Head of caudate nucleus (tissue), 42 donors: ENCODE measurements at regions of chr4 and their contacts with region 1.

Region 1: DNA sequence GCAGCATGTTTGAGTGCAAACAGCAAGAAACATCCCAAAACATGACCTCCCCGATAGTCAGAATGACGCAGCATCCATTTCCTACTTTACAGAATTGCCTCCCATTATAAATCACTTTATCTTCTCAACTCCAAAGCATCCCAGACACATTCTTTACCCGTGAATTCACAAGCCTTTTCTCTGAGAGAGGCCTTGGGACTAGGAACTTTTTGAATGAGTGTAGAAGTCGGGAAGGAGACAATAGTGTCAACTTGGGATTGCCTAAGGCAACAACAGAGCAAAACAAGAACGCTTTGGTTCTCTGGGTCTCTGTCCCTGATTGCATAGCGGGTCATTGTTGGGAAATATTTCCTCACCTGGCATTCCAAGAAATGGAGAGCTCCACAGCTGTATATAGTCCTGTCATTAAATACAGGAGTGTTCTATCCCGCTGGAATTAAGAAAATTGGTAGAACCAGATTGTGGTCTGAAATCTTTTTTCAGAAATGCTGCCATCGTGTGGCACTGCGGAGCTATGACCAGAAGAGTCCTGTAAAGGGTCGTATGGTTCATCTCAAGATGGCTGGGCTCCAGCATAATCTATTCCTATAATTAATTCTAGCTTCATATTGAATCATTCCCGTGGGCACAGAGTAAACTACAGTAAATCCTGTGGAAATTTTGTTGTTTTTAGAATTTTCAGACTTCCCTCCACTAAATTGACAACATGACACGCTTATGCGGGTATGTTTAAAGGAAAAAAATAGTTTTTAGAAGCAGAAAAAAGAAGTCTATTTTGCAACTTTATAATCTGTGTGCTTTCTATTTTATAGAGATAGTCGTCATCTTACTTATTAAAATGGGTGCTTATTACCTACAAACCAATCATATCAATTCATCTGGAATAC is 2.0 kb upstream of the SPP1 start:
- DNase-seq: peak; percentile 25 to 90 (median 72)

Region 2: DNA sequence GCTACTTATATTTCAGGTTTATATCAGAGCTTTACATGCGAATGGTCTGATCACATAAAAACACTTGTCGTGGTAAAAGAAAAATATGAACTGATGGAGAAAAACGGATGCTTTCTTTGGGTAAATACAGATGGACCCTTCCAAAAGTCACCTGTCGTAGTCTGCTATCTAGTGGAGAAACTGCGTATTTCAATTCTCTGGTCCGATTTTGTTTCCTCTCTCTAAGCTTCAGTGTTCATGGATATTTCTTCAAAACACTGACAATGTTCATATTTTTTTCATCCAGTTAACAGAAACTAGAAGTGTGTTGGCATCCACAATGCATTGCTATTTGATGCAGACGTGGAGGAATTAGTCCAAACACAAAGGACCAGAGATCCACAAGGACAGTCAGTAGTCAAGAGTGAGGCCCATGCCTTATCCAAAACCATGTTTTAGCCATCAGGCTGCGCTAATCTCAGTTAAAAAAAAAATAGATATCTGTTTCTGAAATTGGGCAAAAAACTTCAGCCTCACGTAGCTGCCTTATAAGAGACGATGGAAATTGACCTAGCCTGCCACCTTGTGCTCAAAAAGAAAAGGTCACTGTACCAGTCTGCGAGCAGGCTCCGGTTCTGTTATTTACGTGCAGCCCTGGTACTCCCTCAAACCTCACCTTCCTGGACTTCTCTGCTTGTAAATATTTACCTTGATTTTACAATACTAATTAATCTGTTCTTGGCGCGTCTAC is 124.7 kb before region 1 on chr4:
- intact Hi-C with region 1: loop called (anchors 5 kb)
- DNase-seq: peak in 41 of 42 donors; percentile 35 to 89 (median 74)

Region 3: DNA sequence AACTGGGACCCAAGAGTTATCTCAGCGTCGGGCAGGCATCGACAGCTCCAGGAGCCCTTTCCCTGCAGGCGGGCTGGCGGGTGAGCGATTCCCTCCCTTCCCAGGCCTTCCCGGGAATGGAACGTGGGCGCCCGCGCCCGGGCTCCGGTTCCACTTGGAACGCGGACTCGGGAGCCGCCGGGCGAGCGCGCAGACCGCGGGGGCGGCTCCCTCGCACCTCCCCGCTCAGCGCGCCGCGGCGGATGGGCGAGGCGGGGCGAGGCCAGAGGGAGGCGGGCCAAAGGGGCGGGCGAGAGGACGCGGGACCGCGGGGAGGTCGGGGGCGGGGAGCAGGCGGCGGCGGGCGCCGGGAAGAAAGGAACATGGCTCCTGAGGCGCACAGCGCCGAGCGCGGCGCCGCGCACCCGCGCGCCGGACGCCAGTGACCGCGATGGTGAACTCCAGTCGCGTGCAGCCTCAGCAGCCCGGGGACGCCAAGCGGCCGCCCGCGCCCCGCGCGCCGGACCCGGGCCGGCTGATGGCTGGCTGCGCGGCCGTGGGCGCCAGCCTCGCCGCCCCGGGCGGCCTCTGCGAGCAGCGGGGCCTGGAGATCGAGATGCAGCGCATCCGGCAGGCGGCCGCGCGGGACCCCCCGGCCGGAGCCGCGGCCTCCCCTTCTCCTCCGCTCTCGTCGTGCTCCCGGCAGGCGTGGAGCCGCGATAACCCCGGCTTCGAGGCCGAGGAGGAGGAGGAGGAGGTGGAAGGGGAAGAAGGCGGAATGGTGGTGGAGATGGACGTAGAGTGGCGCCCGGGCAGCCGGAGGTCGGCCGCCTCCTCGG is 34.0 kb after region 1 on chr4 and contains the start of gene PKD2:
- intact Hi-C with region 1: loop called (anchors 5 kb)
- DNase-seq: peak; percentile 47 to 96 (median 90)